A549 (cell line): ENCODE measurements at regions of chr9 and their contacts with region 1.

Region 1: GRCh38 chr9:126914458-126915280 is at the start of gene RALGPS1:
- DNase-seq: peak; percentile 95 to 97
- ATAC-seq: peak; percentile 96 to 100
- H3K4me3 ChIP-seq: peak within 1 kb of the TSS; percentile 52
- H3K27ac ChIP-seq: peak within 1 kb of the TSS; percentile 68 to 95
- H3K4me1 ChIP-seq: peaks cover 7% of the 10 kb centered on the region; the same call in 2 of the 3 replicates
- CTCF ChIP-seq: no peak
- EP300 ChIP-seq: no peak
- POLR2A ChIP-seq: peak; percentile 21; the same call in 1 of the 2 replicates
- RAD21 ChIP-seq: no peak
- polyA plus RNA-seq, gene RALGPS1: 7.9 and 8.1 TPM in 2 replicates

Region 2: DNA sequence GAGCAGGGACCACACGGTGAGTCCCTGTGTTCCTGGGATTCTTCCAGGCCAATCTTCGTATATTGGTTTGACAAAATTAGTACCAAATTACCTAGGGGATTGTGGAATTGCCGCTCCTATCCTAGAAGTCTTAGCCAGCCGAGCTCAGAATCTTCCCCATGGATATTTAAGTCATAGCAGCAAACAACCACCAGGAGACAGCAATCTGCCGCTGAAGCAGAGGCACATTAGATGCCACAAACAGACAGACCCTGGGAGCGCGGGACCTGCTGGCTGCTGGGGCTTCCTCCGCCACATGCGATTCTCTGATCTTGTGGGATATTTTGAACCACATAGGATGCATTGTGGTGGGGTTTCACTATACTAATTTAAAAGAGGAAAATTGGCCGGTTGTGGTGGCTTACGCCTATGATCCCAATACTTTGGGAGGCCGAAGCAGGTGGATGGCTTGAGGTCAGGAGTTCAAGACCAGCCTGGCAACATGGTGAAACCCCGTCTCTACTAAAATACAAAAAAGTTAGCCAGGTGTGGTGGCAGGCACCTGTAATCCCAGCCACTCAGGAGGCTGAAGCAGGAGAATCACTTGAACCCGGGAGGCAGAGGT is 141.6 kb before region 1 on chr9:
- CTCF ChIA-PET with region 1: no interaction called
- POLR2A ChIA-PET with region 1: no interaction called
- DNase-seq: peak; percentile 56 to 65
- ATAC-seq: peak; percentile 90 to 93; a peak in 5 of 6 replicates
- H3K4me3 ChIP-seq: no peak overlapping the region
- H3K27ac ChIP-seq: no peak overlapping the region
- H3K4me1 ChIP-seq: no peaks in the 10 kb centered on the region
- CTCF ChIP-seq: peak; percentile 40; the same call in 2 of the 3 replicates
- EP300 ChIP-seq: no peak
- POLR2A ChIP-seq: no peak
- RAD21 ChIP-seq: peak; percentile 50 to 53; a peak in 3 of 5 replicates

Region 3: GRCh38 chr9:126927419-126927818 is 12.8 kb after region 1 on chr9:
- CTCF ChIA-PET with region 1: interaction called, 10 read pairs
- POLR2A ChIA-PET with region 1: no interaction called
- DNase-seq: no peak
- ATAC-seq: no peak
- H3K4me3 ChIP-seq: no peak overlapping the region
- H3K27ac ChIP-seq: no peak overlapping the region
- H3K4me1 ChIP-seq: no peaks in the 10 kb centered on the region
- CTCF ChIP-seq: no peak
- EP300 ChIP-seq: no peak
- POLR2A ChIP-seq: no peak
- RAD21 ChIP-seq: no peak

Region 4: GRCh38 chr9:127021664-127022363 is 107.1 kb after region 1 on chr9:
- CTCF ChIA-PET with region 1: no interaction called
- POLR2A ChIA-PET with region 1: no interaction called
- DNase-seq: no peak
- ATAC-seq: no peak
- H3K4me3 ChIP-seq: no peak overlapping the region
- H3K27ac ChIP-seq: no peak overlapping the region
- H3K4me1 ChIP-seq: no peaks in the 10 kb centered on the region
- CTCF ChIP-seq: no peak
- EP300 ChIP-seq: no peak
- POLR2A ChIP-seq: no peak
- RAD21 ChIP-seq: no peak

Region 5: GRCh38 chr9:127053057-127053821 is 138.6 kb after region 1 on chr9:
- CTCF ChIA-PET with region 1: no interaction called
- POLR2A ChIA-PET with region 1: no interaction called
- DNase-seq: no peak
- ATAC-seq: no peak
- H3K4me3 ChIP-seq: no peak overlapping the region
- H3K27ac ChIP-seq: no peak overlapping the region
- H3K4me1 ChIP-seq: peaks cover 6% of the 10 kb centered on the region; the same call in 2 of the 3 replicates
- CTCF ChIP-seq: no peak
- EP300 ChIP-seq: no peak
- POLR2A ChIP-seq: no peak
- RAD21 ChIP-seq: no peak

Region 6: DNA sequence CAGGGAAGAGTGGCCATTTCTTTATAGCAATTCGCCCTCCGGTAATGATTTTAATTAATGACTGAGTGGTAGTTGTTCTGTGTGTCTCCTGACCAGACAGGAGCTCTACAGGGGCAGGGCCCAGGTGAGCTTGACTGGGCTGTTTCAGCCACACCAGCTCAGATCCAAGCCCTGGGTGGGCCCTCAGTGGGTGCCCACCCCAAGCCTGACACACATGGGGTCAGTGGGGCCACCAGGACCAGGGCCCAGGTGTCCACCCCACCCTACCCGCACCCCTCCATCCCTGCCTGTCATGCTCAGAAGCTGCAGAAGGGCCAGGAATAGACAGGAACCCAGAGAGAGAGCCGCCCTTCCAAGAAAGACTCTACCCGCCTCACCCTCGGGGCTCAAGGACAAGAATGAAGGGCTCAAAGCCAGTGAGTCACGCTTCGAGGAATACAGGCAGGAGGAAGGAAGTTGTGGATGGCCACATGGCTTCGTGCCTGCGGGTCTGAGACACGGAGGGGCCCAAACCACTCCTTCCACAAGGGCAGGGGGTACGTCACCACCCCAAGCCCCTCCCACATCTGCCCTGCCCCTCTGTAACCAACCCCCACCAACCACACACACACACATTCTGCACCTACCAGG is 641.2 kb after region 1 on chr9:
- CTCF ChIA-PET with region 1: no interaction called
- POLR2A ChIA-PET with region 1: interaction called, 10 read pairs
- DNase-seq: peak; percentile 90 to 96
- ATAC-seq: peak; percentile 83 to 86
- H3K4me3 ChIP-seq: no peak overlapping the region
- H3K27ac ChIP-seq: peak overlapping the region; percentile 82 to 92
- H3K4me1 ChIP-seq: peaks cover 87% of the 10 kb centered on the region
- CTCF ChIP-seq: no peak
- EP300 ChIP-seq: no peak
- POLR2A ChIP-seq: no peak
- RAD21 ChIP-seq: 0 out of 5 replicates have a peak, but pooled peaks of 1 of the 2 experiments have one; percentile 9